SK-N-SH (cell line): ENCODE measurements at regions of chr9 and their contacts with region 1.

Region 1: GRCh38 chr9:69186841-69187611 is 12.9 kb downstream of the TJP2 start:
- DNase-seq: no peak
- H3K4me3 ChIP-seq: no peak overlapping the region
- H3K27ac ChIP-seq: peak overlapping the region; percentile 18 to 50; a peak in 3 of 4 replicates
- H3K4me1 ChIP-seq: peaks cover 3 to 16% of the 10 kb centered on the region in 2 experiments; a peak in 3 of 4 replicates
- H3K27me3 ChIP-seq: no peaks in the 10 kb centered on the region
- CTCF ChIP-seq: no peak
- EP300 ChIP-seq: no peak
- RAD21 ChIP-seq: no peak

Region 2: GRCh38 chr9:69035438-69036308 is 151.4 kb before region 1 on chr9 and contains the start of gene FXN:
- CTCF ChIA-PET with region 1: interaction called, 67 read pairs
- POLR2A ChIA-PET with region 1: no interaction called
- DNase-seq: peak; percentile 94
- H3K4me3 ChIP-seq: peak within 1 kb of the TSS; percentile 67 to 82
- H3K27ac ChIP-seq: peak within 1 kb of the TSS; percentile 24 to 74; a peak in 2 of 4 replicates
- H3K4me1 ChIP-seq: peaks cover 0 to 7% of the 10 kb centered on the region in 2 experiments; a peak in 1 of 4 replicates
- H3K27me3 ChIP-seq: no peaks in the 10 kb centered on the region
- CTCF ChIP-seq: peak; percentile 96
- EP300 ChIP-seq: no peak
- RAD21 ChIP-seq: peak; percentile 67
- polyA plus RNA-seq, gene FXN: 14.1 and 15.7 TPM in 2 replicates

Region 3: GRCh38 chr9:69131682-69132081 is 55.3 kb before region 1 on chr9:
- CTCF ChIA-PET with region 1: no interaction called
- POLR2A ChIA-PET with region 1: no interaction called
- DNase-seq: no peak
- H3K4me3 ChIP-seq: no peak overlapping the region
- H3K27ac ChIP-seq: peak overlapping the region in 1 of 2 experiments; percentile 34; a peak in 3 of 4 replicates
- H3K4me1 ChIP-seq: peaks cover 14 to 20% of the 10 kb centered on the region in 2 experiments; a peak in 3 of 4 replicates
- H3K27me3 ChIP-seq: no peaks in the 10 kb centered on the region
- CTCF ChIP-seq: no peak
- EP300 ChIP-seq: no peak
- RAD21 ChIP-seq: no peak

Region 4: DNA sequence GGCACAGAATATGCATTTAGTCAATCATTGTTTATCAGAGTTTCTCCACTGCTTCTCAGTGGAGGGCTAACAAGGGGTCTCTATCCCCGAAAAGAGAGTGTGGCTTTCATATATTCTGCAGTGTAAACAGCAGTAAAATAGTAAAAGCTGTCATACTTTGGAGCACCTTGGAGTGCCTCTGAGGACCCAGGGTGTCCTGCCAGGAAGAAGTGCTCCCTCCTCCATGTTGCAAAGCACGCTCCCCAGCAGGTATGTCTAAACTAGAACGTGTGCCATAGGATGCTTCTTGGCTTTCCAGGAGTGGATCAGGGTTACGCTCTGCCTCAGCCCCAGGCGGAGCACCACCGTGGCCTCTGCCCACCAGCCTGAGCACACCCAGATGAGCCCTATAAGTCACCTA is 21.4 kb before region 1 on chr9:
- CTCF ChIA-PET with region 1: no interaction called
- POLR2A ChIA-PET with region 1: no interaction called
- DNase-seq: no peak
- H3K4me3 ChIP-seq: no peak overlapping the region
- H3K27ac ChIP-seq: no peak overlapping the region
- H3K4me1 ChIP-seq: no peaks in the 10 kb centered on the region
- H3K27me3 ChIP-seq: no peaks in the 10 kb centered on the region
- CTCF ChIP-seq: no peak
- EP300 ChIP-seq: no peak
- RAD21 ChIP-seq: no peak

Region 5: DNA sequence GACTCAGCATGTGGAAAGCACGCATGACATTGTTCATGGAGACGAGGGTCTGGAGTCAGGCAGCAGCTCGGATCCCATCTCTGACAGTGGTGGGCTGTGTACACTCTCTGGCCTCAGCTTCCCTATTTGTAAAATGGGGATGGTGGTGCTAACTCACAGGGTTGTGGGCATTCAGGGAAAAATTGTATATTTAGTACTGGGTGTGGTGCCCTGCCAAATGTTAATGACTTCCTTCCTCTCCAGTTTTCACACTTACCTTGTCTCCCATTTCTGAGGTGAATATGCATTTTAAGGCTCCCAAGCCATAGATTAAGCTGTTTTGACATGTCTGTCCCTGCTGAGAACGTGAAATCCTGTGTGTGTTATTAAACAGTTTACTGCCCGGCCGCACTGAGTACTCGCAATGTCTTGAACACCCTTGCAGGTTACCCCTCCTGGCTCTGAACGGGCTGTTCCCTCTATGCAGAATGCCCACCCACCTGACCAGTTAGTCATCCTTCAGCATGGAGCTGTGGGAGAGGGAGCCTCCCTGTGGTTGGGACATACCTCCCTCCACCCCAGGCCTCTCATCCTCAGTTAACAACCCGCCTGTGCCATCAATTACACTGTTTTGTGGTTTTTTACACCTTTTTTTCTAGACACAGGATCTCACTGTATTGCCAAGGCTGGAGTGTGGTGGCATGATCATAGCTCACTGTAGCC is 12.9 kb after region 1 on chr9:
- CTCF ChIA-PET with region 1: interaction called, 50 read pairs
- POLR2A ChIA-PET with region 1: no interaction called
- DNase-seq: no peak
- H3K4me3 ChIP-seq: no peak overlapping the region
- H3K27ac ChIP-seq: no peak overlapping the region
- H3K4me1 ChIP-seq: no peaks in the 10 kb centered on the region
- H3K27me3 ChIP-seq: no peaks in the 10 kb centered on the region
- CTCF ChIP-seq: no peak
- EP300 ChIP-seq: no peak
- RAD21 ChIP-seq: no peak

Region 6: GRCh38 chr9:69253057-69253456 is 66.0 kb after region 1 on chr9:
- CTCF ChIA-PET with region 1: no interaction called
- POLR2A ChIA-PET with region 1: no interaction called
- DNase-seq: no peak
- H3K4me3 ChIP-seq: no peak overlapping the region
- H3K27ac ChIP-seq: no peak overlapping the region
- H3K4me1 ChIP-seq: no peaks in the 10 kb centered on the region
- H3K27me3 ChIP-seq: no peaks in the 10 kb centered on the region
- CTCF ChIP-seq: no peak
- EP300 ChIP-seq: no peak
- RAD21 ChIP-seq: no peak

Region 7: DNA sequence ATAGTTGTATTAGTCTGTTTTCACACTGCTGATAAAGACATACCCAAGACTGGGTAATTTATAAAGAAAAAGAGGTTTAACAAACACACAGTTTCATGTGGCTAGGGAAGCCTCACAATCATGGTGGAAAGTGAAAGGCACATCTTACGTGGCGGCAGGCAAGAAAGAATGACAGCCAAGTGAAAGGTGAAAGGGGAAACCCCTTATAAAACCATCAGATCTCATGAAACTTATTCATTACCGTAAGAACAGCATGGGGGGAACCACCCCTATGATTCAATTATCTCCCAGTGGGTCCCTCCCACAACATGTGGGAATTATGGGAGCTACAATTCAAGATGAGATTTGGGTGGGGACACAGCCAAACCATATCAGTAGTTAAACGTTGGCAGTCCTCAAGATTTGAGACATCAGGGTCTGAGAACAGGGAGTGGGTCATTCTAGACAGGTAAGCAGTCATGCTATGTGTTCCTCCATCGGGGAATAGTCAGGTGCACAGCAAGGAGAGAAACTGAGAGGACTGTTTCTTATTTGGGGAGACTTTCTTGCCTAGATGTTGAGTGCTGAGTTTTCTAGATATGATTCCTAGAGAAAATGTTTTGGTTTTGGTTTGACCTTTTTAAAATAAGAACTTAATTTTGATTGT is 92.2 kb after region 1 on chr9:
- CTCF ChIA-PET with region 1: no interaction called
- POLR2A ChIA-PET with region 1: no interaction called
- DNase-seq: no peak
- H3K4me3 ChIP-seq: no peak overlapping the region
- H3K27ac ChIP-seq: no peak overlapping the region
- H3K4me1 ChIP-seq: no peaks in the 10 kb centered on the region
- H3K27me3 ChIP-seq: no peaks in the 10 kb centered on the region; the same call in 1 of the 2 replicates
- CTCF ChIP-seq: no peak
- EP300 ChIP-seq: no peak
- RAD21 ChIP-seq: no peak